Kidney (tissue), 22 donors: ENCODE measurements at regions of chr9 and their contacts with region 1.

Region 1: DNA sequence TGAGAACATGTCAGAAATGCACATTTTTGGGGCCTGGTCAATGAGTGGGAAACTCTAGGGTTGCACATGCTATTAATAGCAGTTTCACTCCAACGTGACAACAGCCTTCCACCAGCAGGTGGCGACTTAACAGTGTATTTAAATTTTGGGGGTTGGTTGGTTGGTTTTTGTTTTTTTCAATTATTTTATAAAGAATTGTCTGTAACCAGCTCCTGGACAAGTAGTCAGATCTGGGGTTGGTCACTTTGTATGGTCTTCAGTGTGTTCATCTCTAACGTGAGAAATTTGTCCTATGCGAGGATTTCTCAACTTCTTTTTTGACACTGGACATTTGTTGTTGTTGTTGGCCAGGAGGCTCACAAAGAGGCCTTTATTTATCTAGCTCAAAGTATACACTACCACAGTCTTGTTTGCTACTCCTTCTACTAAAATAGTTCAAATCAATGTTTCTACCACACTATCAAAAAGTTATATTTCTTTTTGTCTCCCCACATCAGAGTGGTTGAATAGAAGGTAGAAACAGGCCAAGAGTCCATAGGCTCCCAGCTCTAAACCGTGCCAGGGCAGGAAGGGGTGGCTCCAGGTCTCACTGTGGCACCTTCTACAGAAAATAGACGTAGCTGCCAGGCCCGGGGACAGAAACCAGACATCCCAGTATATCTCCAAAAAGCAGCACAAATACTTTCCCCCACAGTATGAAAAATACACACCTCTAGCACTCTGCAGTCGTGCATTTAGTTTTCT is 110.4 kb downstream of the TRPM6 start:
- DNase-seq: peak in 4 of 5 donors; percentile 64 to 84 (median 68)
- H3K4me3 ChIP-seq: no peak overlapping the region
- H3K27ac ChIP-seq: no peak overlapping the region
- H3K4me1 ChIP-seq: no peaks in the 10 kb centered on the region
- H3K27me3 ChIP-seq: no peaks in the 10 kb centered on the region
- CTCF ChIP-seq: peak; percentile 84

Region 2: DNA sequence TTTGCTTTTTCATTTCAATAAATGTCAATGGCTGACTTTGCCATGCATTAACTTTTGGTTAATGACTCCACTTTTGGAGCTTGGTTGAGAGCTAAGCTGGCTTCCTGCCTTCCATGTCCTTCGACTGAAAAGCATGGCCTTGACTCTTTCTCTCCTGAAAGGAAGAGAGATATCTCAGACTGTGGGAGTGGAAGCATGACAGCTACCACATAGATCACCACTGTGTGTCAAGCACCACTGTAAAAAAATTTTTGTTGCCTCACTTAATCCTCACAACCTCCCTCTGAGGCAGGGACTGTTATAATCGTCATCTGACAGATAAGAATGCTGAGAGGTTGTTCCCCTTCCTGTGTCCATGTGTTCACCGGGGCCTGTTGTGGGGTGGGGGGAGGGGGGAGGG is 95.4 kb before region 1 on chr9:
- intact Hi-C with region 1: no loop called
- DNase-seq: no peak
- H3K4me3 ChIP-seq: no peak overlapping the region
- H3K27ac ChIP-seq: no peak overlapping the region
- H3K4me1 ChIP-seq: no peaks in the 10 kb centered on the region
- H3K27me3 ChIP-seq: no peaks in the 10 kb centered on the region
- CTCF ChIP-seq: no peak

Region 3: DNA sequence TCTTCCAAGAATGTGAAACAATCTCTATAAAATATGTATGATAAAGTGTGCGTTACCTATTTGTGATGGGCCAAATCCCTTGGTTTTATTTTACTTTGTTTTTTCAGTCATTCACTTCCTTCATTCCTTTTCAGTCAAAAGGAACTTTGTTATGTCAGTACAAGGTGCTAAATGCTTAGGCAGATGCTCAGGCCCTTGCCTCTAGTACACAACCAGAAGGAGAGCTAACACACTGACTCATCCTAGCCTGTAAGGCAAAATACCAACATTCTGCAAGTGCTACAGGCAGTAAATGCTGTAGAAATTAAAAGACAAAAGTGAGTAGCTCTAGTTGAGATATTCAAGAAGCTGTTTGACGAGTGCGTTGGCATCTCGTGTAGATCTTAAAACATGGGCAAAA is 61.0 kb after region 1 on chr9:
- intact Hi-C with region 1: no loop called
- DNase-seq: no peak
- H3K4me3 ChIP-seq: no peak overlapping the region
- H3K27ac ChIP-seq: no peak overlapping the region
- H3K4me1 ChIP-seq: no peaks in the 10 kb centered on the region
- H3K27me3 ChIP-seq: no peaks in the 10 kb centered on the region
- CTCF ChIP-seq: no peak

Region 4: DNA sequence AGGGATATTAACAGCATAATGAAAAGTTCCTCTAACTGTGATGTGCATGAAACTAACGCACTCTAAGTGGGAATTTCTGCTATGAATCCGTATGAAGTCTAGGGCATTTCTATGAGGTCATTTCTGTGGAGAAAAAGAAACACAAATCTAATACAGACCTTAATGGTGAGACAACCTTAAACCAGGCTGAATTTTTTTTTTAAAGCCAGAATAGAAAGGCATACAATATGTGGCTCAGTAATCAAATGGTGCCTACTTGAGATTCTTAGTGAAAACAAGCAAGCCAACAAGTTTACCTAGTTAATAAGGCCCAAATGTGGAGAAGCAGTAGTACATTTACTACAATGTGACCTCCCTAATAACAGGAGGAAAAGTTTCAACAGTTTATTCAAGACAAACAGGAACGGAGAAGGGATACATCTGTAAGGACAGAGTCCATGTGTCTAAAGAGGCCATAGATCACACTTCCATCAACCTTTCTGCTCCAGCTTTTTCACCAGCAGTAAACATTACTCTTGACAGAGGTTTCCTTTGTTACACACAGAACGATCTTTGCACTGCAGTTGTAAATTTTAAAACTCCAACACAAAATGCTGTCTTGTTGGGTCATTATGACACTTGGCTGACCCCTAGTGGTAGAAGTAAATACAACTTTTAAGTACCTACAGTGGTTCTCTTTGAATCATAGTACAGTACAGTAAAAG is 224.6 kb after region 1 on chr9:
- intact Hi-C with region 1: loop called (anchors 5 kb)
- DNase-seq: peak in 3 of 5 donors; percentile 35 to 96 (median 95)
- H3K4me3 ChIP-seq: peak overlapping the region in 1 of 3 donors; percentile 18
- H3K27ac ChIP-seq: no peak overlapping the region
- H3K4me1 ChIP-seq: peaks cover 0 to 9% (median 0%) of the 10 kb centered on the region in 3 donors
- H3K27me3 ChIP-seq: no peaks in the 10 kb centered on the region
- CTCF ChIP-seq: peak; percentile 77

Region 5: GRCh38 chr9:75071530-75072124 is 294.3 kb after region 1 on chr9:
- intact Hi-C with region 1: loop called (anchors 5 kb)
- DNase-seq: peak in 2 of 5 donors; percentile 15 to 82
- H3K4me3 ChIP-seq: no peak overlapping the region
- H3K27ac ChIP-seq: no peak overlapping the region
- H3K4me1 ChIP-seq: no peaks in the 10 kb centered on the region
- H3K27me3 ChIP-seq: no peaks in the 10 kb centered on the region
- CTCF ChIP-seq: no peak

Region 6: GRCh38 chr9:75108555-75108954 is 331.2 kb after region 1 on chr9:
- intact Hi-C with region 1: no loop called
- DNase-seq: peak in 1 of 5 donors; percentile 80
- H3K4me3 ChIP-seq: no peak overlapping the region
- H3K27ac ChIP-seq: no peak overlapping the region
- H3K4me1 ChIP-seq: peaks cover 0 to 5% (median 0%) of the 10 kb centered on the region in 3 donors
- H3K27me3 ChIP-seq: no peaks in the 10 kb centered on the region
- CTCF ChIP-seq: no peak